ENCODE measurements at regions of chr22 and their contacts with region 1.

Region 1: GRCh38 chr22:41403532-41404318 is 22.0 kb downstream of the TEF start:
- DNase-seq: peak; percentile 93 to 100 (median 98)

Region 2: DNA sequence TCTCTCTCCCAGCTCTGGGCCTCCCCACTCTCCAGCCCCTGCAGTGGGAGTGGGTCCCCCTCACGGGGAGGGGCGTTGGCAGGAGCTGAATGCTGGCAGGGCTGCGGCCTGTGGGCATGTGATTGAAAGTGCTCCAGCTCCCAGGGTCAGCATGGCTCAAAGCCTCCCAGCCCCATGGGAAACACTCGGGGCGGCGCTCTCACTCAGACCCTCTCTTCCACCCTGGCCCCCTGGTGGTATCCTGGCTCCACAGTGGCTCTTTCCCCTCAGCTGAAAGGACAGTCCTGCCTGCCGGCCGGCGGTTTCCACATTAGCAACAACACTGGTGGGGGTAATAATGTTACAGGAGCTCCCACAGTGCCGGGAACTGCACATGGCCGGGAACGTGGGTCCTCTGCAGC is 105.0 kb after region 1 on chr22:
- intact Hi-C with region 1: loop called (anchors 2 kb)
- DNase-seq: peak; percentile 70 to 97 (median 82)

Measured in posterior cingulate gyrus (tissue), 11 donors.